Activated naive CD4-positive, alpha-beta T cell treated with anti-CD3 and anti-CD28 coated beads for 36 hours (primary cell): ENCODE measurements at regions of chr1 and their contacts with region 1.

Region 1: GRCh38 chr1:167447521-167448136 is 70.7 kb downstream of the CD247 start:
- DNase-seq: peak; percentile 93
- H3K4me3 Mint-ChIP-seq: peak overlapping the region; percentile 53
- H3K27ac Mint-ChIP-seq: peak overlapping the region; percentile 91
- H3K4me1 Mint-ChIP-seq: peaks cover 76% of the 10 kb centered on the region
- H3K27me3 Mint-ChIP-seq: no peaks in the 10 kb centered on the region

Region 2: DNA sequence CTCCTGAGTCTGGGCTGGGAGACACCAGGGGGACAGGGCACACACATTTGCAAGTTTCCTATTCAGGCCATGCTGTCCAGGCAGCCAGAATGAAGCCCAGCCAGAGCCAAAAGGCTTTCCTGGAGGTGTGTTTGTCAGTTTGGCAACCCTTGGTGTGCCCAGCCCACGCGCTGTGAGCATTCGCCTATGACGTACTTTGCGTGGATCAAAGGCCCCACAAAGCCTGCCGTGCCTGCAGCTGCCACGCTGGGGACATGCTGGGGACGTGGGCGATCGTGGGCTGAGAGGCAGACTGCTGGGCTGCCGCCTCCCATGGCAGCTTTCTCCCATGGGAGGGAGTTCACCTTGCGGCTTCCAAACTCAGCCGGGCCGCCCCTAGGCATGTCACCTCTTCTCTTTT is 13.2 kb after region 1 on chr1:
- CTCF ChIA-PET with region 1: interaction called, 20 read pairs
- intact Hi-C with region 1: loop called (anchors 1 kb)
- DNase-seq: peak; percentile 74
- H3K4me3 Mint-ChIP-seq: peak overlapping the region; percentile 35
- H3K27ac Mint-ChIP-seq: peak overlapping the region; percentile 86
- H3K4me1 Mint-ChIP-seq: peaks cover 88% of the 10 kb centered on the region
- H3K27me3 Mint-ChIP-seq: no peaks in the 10 kb centered on the region

Region 3: GRCh38 chr1:167499664-167500101 is 52.1 kb after region 1 on chr1:
- CTCF ChIA-PET with region 1: interaction called, 3 read pairs
- intact Hi-C with region 1: loop called (anchors 1 kb)
- DNase-seq: peak; percentile 59
- H3K4me3 Mint-ChIP-seq: peak overlapping the region; percentile 10
- H3K27ac Mint-ChIP-seq: peak overlapping the region; percentile 87
- H3K4me1 Mint-ChIP-seq: peaks cover 97% of the 10 kb centered on the region
- H3K27me3 Mint-ChIP-seq: no peaks in the 10 kb centered on the region

Region 4: GRCh38 chr1:167627865-167628641 is 180.4 kb after region 1 on chr1:
- CTCF ChIA-PET with region 1: no interaction called
- intact Hi-C with region 1: loop called (anchors 2 kb)
- DNase-seq: peak; percentile 92
- H3K4me3 Mint-ChIP-seq: peak overlapping the region; percentile 81
- H3K27ac Mint-ChIP-seq: peak overlapping the region; percentile 94
- H3K4me1 Mint-ChIP-seq: peaks cover 55% of the 10 kb centered on the region
- H3K27me3 Mint-ChIP-seq: no peaks in the 10 kb centered on the region

Region 5: DNA sequence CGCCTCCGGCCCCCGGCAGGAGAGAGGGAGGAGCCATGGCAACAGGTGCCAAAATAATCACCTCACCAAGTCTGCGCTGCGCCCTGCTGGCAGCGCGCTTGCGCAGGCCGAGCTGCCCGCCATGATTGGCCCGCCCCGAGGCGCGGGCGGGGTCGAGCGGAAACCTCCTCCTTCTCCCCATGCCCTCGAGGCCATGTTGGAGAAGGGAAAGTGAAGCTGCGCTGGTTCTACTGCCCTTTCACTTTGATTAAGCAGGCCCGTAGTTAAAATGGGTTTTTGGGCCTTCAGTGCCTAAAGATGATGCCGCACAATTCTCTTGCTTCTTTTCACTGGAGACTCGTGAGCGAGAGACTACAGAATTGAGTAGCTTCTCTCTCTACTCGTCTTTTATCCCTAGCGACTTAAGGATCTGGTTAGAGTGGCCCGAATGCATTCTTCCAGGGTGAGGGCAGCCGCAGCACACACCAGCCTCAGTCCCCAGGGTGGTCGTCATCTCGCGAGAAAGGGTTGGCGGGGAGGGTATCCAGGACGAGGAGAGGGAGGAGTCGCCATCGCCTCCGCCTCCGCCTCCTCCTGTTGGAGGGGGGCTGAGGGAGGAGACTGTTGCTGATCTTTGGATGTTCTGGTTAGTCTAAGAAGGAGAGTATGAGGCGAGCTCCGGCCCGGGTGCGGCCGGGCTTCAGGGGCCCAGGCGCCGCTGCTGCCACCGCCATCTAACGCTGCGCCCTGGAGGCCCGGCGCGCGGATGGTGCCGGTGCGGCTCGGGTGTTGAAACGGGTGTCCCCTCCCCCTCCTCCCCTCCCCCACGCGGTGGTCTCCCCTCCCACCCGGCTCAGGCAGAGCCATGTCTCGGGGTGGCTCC is 488.7 kb after region 1 on chr1 and contains the start of gene DCAF6:
- CTCF ChIA-PET with region 1: no interaction called
- intact Hi-C with region 1: loop called (anchors 1 kb)
- DNase-seq: peak; percentile 97
- H3K4me3 Mint-ChIP-seq: peak within 1 kb of the TSS; percentile 85
- H3K27ac Mint-ChIP-seq: peak within 1 kb of the TSS; percentile 100
- H3K4me1 Mint-ChIP-seq: peaks cover 32% of the 10 kb centered on the region
- H3K27me3 Mint-ChIP-seq: no peaks in the 10 kb centered on the region
- total RNA-seq, gene DCAF6: 15.4 to 15.9 TPM